Activated B cell treated with CpG ODN at 0.5 μM for 24 hours (primary cell): ENCODE measurements at regions of chr6 and their contacts with region 1.

Region 1: DNA sequence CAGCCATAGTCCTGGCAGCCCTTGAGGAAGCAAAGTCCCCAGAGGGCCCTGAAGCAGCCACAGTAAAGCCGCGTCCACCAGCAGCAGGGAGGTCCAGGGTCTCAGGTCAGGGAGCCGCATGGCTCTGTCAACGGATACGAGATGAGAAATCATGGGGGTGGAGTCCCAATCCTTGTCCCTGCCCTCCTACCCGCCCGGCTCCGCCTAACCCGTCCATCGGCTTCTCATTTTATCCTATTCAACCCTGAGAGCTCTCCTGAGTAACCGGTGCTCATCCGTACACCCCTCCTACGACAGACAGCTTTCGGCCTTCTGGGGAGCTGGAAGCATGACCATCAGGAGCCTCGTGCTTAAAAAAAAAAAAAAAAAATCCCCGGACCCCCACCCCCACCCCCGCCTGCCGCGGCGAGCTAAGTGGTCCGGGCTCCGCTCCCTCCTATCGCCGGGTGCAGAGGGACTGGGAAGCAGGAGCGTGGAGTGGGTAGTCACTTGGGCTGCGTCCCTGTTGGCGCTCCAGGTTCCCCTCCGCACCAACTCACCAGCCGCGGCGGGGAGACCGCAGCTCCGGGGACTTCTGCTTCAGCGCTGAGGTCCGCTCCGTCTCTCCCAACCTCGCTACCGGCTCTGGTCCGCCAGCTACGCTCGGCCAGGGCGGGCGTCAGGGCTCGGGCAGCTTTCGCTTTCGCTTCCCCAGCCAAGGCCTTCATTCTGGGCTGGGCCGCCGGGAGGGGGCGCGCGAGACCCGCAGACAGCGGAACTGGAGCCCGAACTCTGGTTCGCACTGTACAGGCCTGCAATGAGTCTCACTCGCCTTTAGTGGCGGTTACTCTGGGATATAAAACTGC is at the start of gene TAP2:
- DNase-seq: peak; percentile 98
- ATAC-seq: peak; percentile 82
- H3K4me3 Mint-ChIP-seq: peak within 1 kb of the TSS; percentile 92
- H3K27ac Mint-ChIP-seq: peak within 1 kb of the TSS; percentile 100
- H3K4me1 Mint-ChIP-seq: peaks cover 91% of the 10 kb centered on the region
- H3K27me3 Mint-ChIP-seq: no peaks in the 10 kb centered on the region
- CTCF ChIP-seq: peak; percentile 23
- total RNA-seq, gene TAP2: 141 and 172 TPM in 2 replicates

Region 2: GRCh38 chr6:32741031-32741960 is 97.0 kb before region 1 on chr6 and contains the start of gene HLA-DQA2:
- CTCF ChIA-PET with region 1: no interaction called
- POLR2A ChIA-PET with region 1: no interaction called
- intact Hi-C with region 1: no loop called
- DNase-seq: peak; percentile 41
- ATAC-seq: peak; percentile 99
- H3K4me3 Mint-ChIP-seq: peak within 1 kb of the TSS; percentile 81
- H3K27ac Mint-ChIP-seq: peak within 1 kb of the TSS; percentile 83
- H3K4me1 Mint-ChIP-seq: peaks cover 6% of the 10 kb centered on the region
- H3K27me3 Mint-ChIP-seq: peaks cover 19% of the 10 kb centered on the region
- CTCF ChIP-seq: no peak
- total RNA-seq, gene HLA-DQA2: 231 and 237 TPM in 2 replicates

Region 3: GRCh38 chr6:32785781-32786533 is 52.4 kb before region 1 on chr6:
- CTCF ChIA-PET with region 1: interaction called, 14 read pairs
- POLR2A ChIA-PET with region 1: interaction called, 4 read pairs
- intact Hi-C with region 1: no loop called
- DNase-seq: no peak
- ATAC-seq: peak; percentile 88
- H3K4me3 Mint-ChIP-seq: no peak overlapping the region
- H3K27ac Mint-ChIP-seq: no peak overlapping the region
- H3K4me1 Mint-ChIP-seq: peaks cover 2% of the 10 kb centered on the region
- H3K27me3 Mint-ChIP-seq: no peaks in the 10 kb centered on the region
- CTCF ChIP-seq: no peak

Region 4: GRCh38 chr6:32825966-32826365 is 12.4 kb before region 1 on chr6:
- CTCF ChIA-PET with region 1: interaction called, 44 read pairs
- POLR2A ChIA-PET with region 1: interaction called, 29 read pairs
- intact Hi-C with region 1: loop called (anchors 1 kb)
- DNase-seq: no peak
- ATAC-seq: no peak
- H3K4me3 Mint-ChIP-seq: no peak overlapping the region
- H3K27ac Mint-ChIP-seq: no peak overlapping the region
- H3K4me1 Mint-ChIP-seq: peaks cover 17% of the 10 kb centered on the region
- H3K27me3 Mint-ChIP-seq: no peaks in the 10 kb centered on the region
- CTCF ChIP-seq: no peak

Region 5: DNA sequence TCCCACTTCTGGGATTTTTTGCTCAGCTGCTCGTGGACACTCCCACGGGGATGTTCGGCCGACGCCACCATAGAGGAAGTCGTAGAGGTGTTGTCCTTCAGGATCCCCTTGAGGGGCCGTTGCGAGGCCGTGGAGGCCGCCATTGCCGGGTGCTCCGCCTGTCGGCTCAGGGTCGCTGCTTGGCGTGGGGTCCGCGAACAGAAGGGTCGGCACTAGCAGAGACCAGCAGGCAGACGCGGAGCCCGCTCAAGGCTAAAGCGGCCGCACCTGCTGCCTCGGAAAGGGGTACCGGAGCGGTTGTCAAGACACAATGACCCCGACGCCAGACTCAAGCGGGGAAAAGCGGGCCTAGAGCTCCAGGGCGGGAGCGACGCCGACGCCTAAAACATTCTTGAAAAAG is 41.4 kb after region 1 on chr6:
- CTCF ChIA-PET with region 1: interaction called, 11 read pairs
- POLR2A ChIA-PET with region 1: interaction called, 7 read pairs
- intact Hi-C with region 1: no loop called
- DNase-seq: no peak
- ATAC-seq: peak; percentile 21
- H3K4me3 Mint-ChIP-seq: peak overlapping the region; percentile 73
- H3K27ac Mint-ChIP-seq: no peak overlapping the region
- H3K4me1 Mint-ChIP-seq: peaks cover 17% of the 10 kb centered on the region
- H3K27me3 Mint-ChIP-seq: peaks cover 4% of the 10 kb centered on the region
- CTCF ChIP-seq: no peak

Region 6: DNA sequence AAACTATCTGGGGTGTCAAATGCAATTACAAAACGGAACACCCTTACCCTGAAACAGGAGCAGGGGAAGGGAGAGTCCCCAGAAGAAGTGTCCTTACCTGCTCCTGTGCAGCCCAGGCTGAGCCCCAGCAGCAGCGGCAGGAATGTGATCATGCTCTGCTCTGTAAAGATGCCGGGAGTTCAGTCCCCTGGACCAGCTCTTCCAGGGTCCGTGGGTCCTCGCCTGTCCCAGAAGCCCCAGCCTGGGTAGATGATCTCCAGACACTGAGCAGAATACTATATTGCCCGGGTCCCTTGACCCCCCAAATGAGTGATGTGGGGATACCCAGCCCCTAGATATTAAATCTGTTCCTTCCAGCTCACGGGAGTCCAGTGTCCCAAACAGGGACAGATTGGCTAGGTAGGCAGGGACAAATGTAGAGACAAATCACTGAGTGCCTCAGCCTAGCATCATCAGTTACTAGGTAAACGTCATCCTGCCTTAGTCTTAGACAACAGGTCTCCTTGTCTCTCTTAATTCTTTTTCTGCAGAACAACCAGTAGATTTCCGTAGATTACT is 102.4 kb after region 1 on chr6 and contains the start of gene HLA-DMB:
- CTCF ChIA-PET with region 1: interaction called, 6 read pairs
- POLR2A ChIA-PET with region 1: interaction called, 19 read pairs
- intact Hi-C with region 1: no loop called
- DNase-seq: peak; percentile 53
- ATAC-seq: peak; percentile 60
- H3K4me3 Mint-ChIP-seq: peak within 1 kb of the TSS; percentile 98
- H3K27ac Mint-ChIP-seq: peak within 1 kb of the TSS; percentile 99
- H3K4me1 Mint-ChIP-seq: peaks cover 85% of the 10 kb centered on the region
- H3K27me3 Mint-ChIP-seq: no peaks in the 10 kb centered on the region
- CTCF ChIP-seq: no peak
- total RNA-seq, gene HLA-DMB: 341 and 365 TPM in 2 replicates

Region 7: GRCh38 chr6:33075568-33076405 is 237.5 kb after region 1 on chr6 and contains the start of gene HLA-DPB1:
- CTCF ChIA-PET with region 1: no interaction called
- POLR2A ChIA-PET with region 1: interaction called, 12 read pairs
- intact Hi-C with region 1: no loop called
- DNase-seq: peak; percentile 42
- ATAC-seq: peak; percentile 76
- H3K4me3 Mint-ChIP-seq: peak within 1 kb of the TSS; percentile 95
- H3K27ac Mint-ChIP-seq: peak within 1 kb of the TSS; percentile 99
- H3K4me1 Mint-ChIP-seq: peaks cover 66% of the 10 kb centered on the region
- H3K27me3 Mint-ChIP-seq: no peaks in the 10 kb centered on the region
- CTCF ChIP-seq: no peak
- total RNA-seq, gene HLA-DPB1: 853 and 854 TPM in 2 replicates